GM13976 (cell line): ENCODE measurements at regions of chr18 and their contacts with region 1.

Region 1: DNA sequence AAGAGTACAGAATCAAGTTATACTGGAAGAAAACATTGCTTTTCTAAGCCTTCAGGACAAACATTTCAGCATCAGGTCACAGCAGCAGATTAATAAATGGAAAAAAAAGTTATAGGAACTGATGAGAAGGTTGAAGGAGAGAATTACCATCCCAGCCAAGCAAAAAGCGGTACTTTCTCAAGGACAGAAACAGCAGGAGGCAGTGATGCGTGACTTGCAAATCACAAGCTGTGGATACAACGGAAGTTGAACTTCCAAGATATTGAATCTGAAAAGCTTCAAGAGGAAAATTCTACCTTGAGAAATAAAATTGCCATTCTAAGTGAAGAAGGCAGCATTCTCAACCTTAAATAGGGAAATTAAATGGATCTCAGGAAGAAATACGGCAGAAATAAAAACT is 18.5 kb upstream of the SERPINB12 start:
- DNase-seq: no peak
- CTCF ChIP-seq: no peak

Region 2: GRCh38 chr18:63578357-63578958 is 54.8 kb after region 1 on chr18:
- in situ Hi-C with region 1: loop called (anchors 10 kb)
- DNase-seq: peak; percentile 31
- CTCF ChIP-seq: peak; percentile 46

Region 3: DNA sequence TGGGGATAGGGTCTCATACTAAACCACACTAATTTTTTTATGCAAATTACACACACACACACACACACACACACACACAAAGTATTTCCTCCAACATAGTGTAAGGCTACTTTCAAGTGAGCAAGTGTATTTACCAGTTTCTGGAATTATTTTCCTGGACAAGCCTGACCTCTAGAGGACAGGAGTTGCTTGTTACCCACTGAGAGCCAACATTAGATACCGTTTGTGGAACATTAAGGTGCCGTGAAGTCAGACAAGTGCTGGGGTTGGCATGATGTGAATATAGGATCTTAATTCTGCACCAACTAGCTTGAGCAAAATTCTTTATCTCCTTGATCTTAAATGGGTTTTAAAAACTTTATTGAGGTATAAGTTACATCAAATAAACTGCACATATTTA is 324.5 kb after region 1 on chr18:
- in situ Hi-C with region 1: loop called (anchors 10 kb)
- DNase-seq: no peak
- CTCF ChIP-seq: peak; percentile 65

Region 4: GRCh38 chr18:64119916-64120315 is 596.3 kb after region 1 on chr18:
- in situ Hi-C with region 1: no loop called
- DNase-seq: no peak
- CTCF ChIP-seq: no peak